Cardiac septum (tissue), 1 donor: ENCODE measurements at regions of chr9 and their contacts with region 1.

Region 1: DNA sequence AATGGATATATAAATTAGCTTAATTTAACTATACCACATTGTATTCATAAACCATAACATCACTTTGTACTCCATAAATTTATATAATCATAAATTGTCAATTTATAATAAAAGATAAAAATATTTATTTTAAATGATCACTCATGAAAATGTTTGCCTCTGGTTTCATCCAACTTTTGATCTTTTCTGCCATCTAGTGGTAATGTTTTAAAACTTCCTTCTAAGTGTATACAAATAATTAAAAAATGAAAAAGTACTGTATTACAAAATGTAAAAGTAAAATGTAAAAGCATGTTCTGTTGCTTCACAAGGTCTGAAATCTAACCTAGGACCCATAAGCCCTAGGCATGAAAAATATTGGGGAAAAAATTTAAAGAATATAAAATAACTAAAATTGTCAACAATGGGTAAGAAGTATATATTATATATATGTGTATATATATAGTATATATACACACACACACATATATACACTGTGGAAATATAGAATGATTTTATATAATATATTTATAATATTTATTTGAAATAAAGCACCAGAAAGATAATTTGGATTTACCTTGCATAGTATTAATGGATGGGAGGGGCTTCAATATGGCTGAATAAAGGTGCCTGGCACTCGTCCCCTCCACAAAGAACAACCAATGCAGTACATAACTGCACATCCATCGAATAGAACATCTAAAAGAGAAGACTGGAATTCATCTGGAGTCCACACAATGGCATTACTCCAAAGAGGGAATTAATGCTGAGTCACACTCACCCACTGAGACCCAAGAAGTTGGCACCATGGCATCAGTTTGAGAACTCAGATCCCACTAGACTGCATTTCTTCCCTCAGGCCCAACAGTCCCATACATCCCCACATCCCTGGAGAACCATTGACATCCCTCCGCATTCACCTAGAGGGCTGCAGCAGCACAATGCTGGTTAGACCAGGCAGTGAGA is 32.5 kb downstream of the ANXA1 start:
- DNase-seq: no peak

Region 2: DNA sequence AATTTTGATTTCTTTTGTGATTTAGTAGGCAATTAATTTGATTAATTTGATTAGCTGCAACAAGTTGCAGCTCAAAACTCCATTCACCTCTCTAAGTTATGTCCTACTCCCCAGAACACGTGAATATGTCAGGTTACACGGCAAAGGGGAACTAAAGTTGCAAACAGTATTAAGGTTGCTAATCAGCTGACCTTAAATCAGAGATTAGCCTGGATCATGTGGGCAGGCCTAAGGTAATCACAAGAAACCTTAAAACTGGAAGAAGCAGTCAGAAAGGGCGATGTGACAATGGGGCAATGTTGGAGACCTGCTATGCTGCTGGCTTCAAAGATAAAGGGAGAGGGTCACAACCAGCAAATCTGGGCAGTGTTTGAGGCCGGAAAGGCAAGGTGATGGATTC is 79.8 kb before region 1 on chr9:
- intact Hi-C with region 1: loop called (anchors 2 kb)
- DNase-seq: no peak

Region 3: GRCh38 chr9:73149371-73150067 is 34.7 kb before region 1 on chr9:
- intact Hi-C with region 1: no loop called
- DNase-seq: no peak

Region 4: GRCh38 chr9:73239570-73240267 is 55.5 kb after region 1 on chr9:
- intact Hi-C with region 1: no loop called
- DNase-seq: no peak

Region 5: DNA sequence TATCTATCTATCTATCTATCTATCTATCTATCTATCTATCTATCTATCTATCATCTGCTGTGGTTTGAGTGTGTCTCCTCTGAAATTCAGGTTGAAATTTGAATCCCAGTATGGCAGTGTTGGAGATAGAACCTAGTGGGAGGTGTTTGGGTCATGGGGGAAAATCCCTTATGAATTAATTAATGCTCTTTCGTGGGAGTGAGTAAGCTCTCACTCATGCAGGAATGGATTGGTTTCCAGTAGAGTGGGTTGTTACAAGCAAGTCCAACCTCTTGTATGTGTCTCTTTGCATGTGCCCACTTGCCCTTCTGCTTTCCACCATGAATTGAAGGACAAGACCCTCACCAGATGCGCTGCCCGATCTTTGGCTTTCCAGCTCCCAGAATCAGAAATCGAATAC is 80.4 kb after region 1 on chr9:
- intact Hi-C with region 1: no loop called
- DNase-seq: no peak